Spleen (tissue), 13 donors: ENCODE measurements at regions of chr14 and their contacts with region 1.

Region 1: DNA sequence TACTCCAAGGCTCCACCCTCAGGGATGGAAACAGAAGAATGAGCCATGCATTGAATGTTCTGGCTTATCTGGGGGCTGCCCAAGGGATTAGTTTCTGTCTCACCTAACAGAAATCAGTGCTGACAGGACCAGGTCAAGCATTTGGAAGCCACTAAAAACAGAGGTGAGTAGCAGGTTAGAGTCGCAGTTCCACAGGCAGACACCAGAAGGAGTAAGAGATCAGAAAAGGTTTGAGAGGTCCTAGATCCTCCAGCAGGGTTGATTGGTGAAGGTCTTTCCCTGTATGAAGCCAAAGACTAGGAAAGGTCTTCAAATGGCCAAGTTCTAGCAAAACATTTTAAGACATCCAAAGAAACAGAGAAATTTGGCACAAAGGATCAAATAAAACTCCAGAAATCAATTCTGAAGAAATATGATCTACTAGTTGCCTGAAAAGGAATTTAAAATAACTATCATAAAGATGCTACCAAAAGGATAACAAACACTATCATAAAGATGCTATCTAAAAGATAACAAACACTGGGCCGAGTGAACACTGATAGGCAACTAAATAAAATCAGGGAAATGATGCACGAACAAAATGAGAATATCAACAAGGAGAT is 19.5 kb upstream of the TTC9 start:
- DNase-seq: no peak
- H3K4me3 ChIP-seq: no peak overlapping the region
- H3K27ac ChIP-seq: no peak overlapping the region
- H3K4me1 ChIP-seq: peaks cover 0 to 10% (median 0%) of the 10 kb centered on the region in 6 donors
- H3K27me3 ChIP-seq: no peaks in the 10 kb centered on the region
- CTCF ChIP-seq: peak; percentile 55 to 89 (median 76)
- POLR2A ChIP-seq: no peak

Region 2: GRCh38 chr14:70714055-70714621 is 91.9 kb after region 1 on chr14:
- intact Hi-C with region 1: loop called (anchors 5 kb)
- DNase-seq: no peak
- H3K4me3 ChIP-seq: no peak overlapping the region
- H3K27ac ChIP-seq: peak overlapping the region in 1 of 8 donors; percentile 31
- H3K4me1 ChIP-seq: peaks cover 0 to 23% (median 14%) of the 10 kb centered on the region in 6 donors
- H3K27me3 ChIP-seq: no peaks in the 10 kb centered on the region
- CTCF ChIP-seq: peak; percentile 26 to 88 (median 60)
- POLR2A ChIP-seq: no peak

Region 3: DNA sequence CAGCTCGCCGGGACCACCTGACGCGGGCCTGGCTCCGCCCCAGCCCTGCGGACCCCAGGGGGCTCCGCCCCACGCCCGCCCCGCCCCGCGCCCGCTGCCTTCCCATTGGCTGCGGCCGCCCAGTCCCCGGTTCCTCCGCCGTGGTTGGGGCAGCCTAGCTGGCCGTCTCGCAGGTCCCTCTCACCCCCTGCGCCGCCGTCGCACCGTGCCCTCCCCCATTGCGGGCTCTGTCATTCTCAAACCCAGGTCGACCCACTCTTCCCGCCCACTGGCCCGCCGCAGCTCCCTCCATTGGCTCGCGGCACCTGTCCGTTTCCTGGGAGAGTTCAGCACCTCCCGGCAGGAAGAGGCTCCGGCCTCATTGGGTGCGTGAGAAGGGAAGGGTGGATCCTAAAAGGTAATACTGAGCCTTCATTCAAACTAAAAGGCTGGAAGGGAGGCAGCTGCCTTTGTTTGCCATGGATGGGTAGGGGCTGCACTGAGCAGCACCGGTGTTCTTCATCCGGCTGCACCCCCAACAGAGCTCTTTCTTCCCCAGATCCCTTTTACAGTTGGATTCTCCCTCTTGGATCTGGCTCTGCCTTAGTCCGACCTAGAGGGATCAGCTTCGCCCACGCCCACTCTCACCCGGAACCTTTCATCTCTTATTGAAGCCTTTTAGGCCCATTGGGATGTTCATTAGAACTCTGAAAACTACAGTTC is 187.5 kb after region 1 on chr14:
- intact Hi-C with region 1: loop called (anchors 10 kb)
- DNase-seq: peak; percentile 96
- H3K4me3 ChIP-seq: peak overlapping the region; percentile 58 to 97 (median 86)
- H3K27ac ChIP-seq: peak overlapping the region; percentile 26 to 86 (median 74)
- H3K4me1 ChIP-seq: peaks cover 0 to 36% (median 21%) of the 10 kb centered on the region in 6 donors
- H3K27me3 ChIP-seq: peaks cover 0 to 39% (median 0%) of the 10 kb centered on the region in 7 donors
- CTCF ChIP-seq: no peak
- POLR2A ChIP-seq: no peak